ENCODE measurements at regions of chr1 and their contacts with region 1.

Region 1: DNA sequence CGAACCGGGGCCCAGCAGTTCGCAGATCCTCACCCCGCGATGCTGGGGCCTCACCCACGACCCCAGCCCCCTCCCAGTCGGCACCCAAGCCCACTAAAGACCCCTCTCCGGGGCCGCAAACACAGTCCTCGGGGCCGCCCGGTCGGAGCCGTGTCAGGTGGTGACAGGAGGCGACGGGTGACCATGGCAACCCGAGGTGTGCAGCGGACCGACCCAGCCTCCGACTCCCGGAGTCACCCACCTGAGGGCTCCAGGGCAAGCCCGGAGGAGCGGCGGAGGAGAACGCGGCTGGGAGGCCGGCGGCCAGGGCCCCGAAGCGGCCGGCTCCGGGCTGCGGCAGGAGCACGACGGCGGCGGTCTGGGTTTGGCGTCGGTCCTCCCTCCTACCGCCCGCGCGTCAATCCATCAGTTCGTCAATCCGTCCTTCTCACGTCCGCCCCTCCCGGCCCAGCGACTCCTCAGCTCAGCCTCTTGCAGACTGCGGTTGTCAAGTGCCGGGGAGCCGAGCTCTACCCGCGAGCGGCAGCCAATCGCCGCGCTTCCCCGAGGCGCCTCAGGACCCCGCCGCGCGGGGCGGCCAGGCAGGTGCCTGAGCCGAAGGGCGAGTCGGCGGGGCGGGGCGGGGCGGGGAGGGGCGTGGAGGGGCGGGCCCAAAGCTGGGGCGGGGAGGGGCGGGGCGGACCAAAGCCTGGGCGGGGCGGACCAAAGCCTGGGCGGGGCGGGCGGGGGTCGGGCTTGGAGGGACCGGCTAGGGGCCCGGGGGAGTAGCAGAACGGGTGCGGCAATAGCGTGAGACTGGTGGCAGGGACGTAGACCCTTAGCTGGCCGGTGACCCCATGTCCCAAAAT is at the start of gene WDR47:
- DNase-seq: peak; percentile 89
- ATAC-seq: peak; percentile 96
- H3K4me3 Mint-ChIP-seq: peak within 1 kb of the TSS; percentile 88
- H3K27ac Mint-ChIP-seq: peak within 1 kb of the TSS; percentile 60
- H3K4me1 Mint-ChIP-seq: peaks cover 15% of the 10 kb centered on the region
- H3K27me3 Mint-ChIP-seq: no peaks in the 10 kb centered on the region
- CTCF ChIP-seq: no peak
- total RNA-seq, gene WDR47: 10.3 and 10.9 TPM in 2 replicates

Region 2: DNA sequence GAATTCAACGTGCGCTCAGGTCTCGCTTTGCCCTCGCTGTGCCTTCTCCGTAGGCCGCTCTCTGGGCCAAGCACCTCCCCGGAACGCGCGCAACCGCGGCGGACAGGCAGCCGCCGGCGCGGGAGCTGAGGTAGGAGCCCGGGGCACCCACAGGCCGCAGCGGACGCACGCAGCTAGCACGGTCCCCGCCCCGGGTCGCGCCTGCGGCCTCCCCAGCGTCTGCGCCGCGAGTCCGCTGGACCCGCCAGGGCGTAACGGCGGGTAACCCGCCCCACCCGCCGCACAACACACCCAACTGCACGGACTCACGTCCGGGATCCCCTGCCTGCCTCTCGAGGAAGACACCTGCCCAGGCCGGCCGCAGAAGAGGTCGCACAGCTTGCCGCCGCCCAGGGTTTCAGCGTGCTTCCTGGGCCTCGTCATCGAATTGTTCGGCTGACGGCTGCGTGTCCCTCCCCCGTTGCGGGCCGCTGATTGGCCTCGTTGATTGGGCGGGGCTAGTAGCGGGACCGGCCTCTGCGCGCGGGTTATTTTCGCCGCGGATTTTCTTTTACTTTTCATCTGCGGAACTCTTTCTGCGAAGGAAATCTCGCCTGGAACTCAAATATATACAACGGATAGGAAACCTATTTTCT is 78.7 kb before region 1 on chr1 and contains the start of gene CLCC1:
- CTCF ChIA-PET with region 1: no interaction called
- POLR2A ChIA-PET with region 1: interaction called, 6 read pairs
- intact Hi-C with region 1: loop called (anchors 1 kb)
- DNase-seq: peak; percentile 84
- ATAC-seq: peak; percentile 94
- H3K4me3 Mint-ChIP-seq: peak within 1 kb of the TSS; percentile 88
- H3K27ac Mint-ChIP-seq: peak within 1 kb of the TSS; percentile 91
- H3K4me1 Mint-ChIP-seq: peaks cover 35% of the 10 kb centered on the region
- H3K27me3 Mint-ChIP-seq: no peaks in the 10 kb centered on the region
- CTCF ChIP-seq: no peak
- total RNA-seq, gene CLCC1: 19.5 and 28.3 TPM in 2 replicates

Region 3: DNA sequence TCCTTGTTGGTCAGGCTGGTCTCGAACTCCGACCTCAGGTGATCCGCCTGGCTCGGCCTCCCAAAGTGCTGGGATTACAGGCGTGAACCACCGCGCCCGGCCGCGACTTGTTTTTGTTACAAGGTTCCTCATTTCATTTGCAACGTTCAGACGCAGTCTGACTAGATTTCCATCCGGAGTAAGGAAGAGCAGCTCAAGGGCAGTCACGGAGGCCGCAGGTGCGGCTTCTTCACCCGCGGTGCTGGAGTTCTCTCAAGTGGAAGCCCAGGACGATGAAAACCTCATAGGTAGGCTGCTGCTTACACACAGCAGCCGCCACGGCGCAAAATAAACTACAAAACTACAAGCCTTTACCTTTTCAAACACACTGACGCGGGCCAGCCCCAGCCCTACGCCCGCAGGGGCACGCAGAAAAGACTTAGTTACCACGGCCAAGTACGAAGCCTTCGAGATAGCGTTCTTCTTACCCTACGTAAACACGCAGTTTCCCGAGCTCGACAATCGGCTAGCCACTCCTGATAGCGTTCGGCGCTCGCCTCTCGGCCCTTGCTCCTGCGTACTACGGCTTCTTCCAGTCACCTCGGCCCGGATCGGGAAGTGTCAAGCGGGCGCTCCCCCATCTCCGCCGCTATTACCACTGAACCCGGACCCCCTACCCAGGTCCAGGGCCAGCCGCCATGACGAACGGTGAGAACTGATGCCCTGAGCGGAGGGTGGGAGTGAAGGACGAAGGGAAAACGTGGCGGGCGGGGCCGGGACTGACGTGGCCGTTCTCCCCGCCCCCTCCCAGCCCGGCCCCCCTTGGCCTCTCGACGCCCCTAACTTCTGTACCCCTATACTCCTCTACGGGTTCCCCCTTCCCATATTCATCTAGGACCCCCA is 48.6 kb after region 1 on chr1 and contains the start of gene TMEM167B:
- CTCF ChIA-PET with region 1: no interaction called
- POLR2A ChIA-PET with region 1: interaction called, 26 read pairs
- intact Hi-C with region 1: loop called (anchors 1 kb)
- DNase-seq: peak; percentile 79
- ATAC-seq: peak; percentile 87
- H3K4me3 Mint-ChIP-seq: peak within 1 kb of the TSS; percentile 98
- H3K27ac Mint-ChIP-seq: peak within 1 kb of the TSS; percentile 97
- H3K4me1 Mint-ChIP-seq: peaks cover 35% of the 10 kb centered on the region
- H3K27me3 Mint-ChIP-seq: no peaks in the 10 kb centered on the region
- CTCF ChIP-seq: no peak
- total RNA-seq, gene TMEM167B: 45.0 and 48.2 TPM in 2 replicates

Measured in activated B cell treated with CpG ODN at 0.5 μM for 24 hours (primary cell).